Upper lobe of right lung (tissue), 1 donor: ENCODE measurements at regions of chr12 and their contacts with region 1.

Region 1: GRCh38 chr12:52879394-52880351 is 25.2 kb downstream of the KRT8 start:
- DNase-seq: peak; percentile 85
- ATAC-seq: peak; percentile 88
- H3K4me3 ChIP-seq: peak overlapping the region; percentile 23
- H3K27ac ChIP-seq: no peak overlapping the region
- H3K4me1 ChIP-seq: peaks cover 6% of the 10 kb centered on the region
- H3K27me3 ChIP-seq: peaks cover 7% of the 10 kb centered on the region
- CTCF ChIP-seq: peak; percentile 63

Region 2: GRCh38 chr12:52139552-52140062 is 740.1 kb before region 1 on chr12:
- intact Hi-C with region 1: loop called (anchors 10 kb)
- DNase-seq: no peak
- ATAC-seq: peak; percentile 77
- H3K4me3 ChIP-seq: no peak overlapping the region
- H3K27ac ChIP-seq: no peak overlapping the region
- H3K4me1 ChIP-seq: no peaks in the 10 kb centered on the region
- H3K27me3 ChIP-seq: no peaks in the 10 kb centered on the region
- CTCF ChIP-seq: peak; percentile 59